ENCODE measurements at regions of chr7 and their contacts with region 1.

Region 1: DNA sequence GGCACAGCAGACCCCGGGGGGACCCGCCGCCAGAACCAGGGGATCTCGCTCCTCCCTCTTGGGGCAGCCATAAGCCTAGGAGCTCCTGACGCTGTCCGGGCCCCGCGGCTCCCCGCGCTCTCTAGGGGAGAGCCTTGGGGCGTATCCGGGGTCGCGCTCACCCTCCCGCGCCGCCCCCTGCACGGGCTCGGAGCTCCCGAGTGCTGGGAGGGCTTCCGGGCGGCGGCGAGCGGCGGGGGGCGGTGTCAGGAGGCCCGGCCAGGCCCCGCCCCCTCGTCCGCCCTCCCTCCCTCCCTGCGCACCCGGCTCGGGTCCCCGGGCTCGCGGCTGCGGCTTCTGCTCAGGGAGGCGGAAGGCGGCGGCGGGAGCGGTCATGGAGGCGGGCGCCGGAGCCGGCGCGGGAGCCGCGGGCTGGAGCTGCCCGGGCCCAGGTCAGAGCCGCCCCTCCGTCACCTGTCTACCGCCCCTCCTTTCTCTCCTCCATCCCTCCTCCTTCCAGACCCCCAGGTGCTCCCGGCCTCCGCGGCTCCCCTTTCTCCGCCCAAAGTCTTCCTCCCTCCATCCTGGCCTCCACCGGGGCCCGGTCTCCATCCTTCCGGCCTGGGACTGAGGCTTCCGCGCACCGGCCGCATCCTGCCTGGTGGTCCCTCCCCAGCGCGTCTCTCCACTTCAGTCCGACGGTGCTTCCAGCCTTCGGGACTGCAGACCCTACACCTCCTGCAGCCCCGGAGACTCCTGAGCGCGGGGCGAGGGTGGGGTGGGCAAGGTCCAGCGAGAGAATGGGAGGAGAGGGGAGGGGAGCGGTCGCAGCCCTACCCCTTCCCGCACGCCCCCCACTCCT is 427 bp upstream of the CCDC136 start:
- DNase-seq: peak; percentile 65 to 66
- H3K4me3 ChIP-seq: peak overlapping the region; percentile 65 to 77
- H3K27ac ChIP-seq: peak overlapping the region; percentile 81 to 86
- H3K4me1 ChIP-seq: peaks cover 0 to 14% of the 10 kb centered on the region in 2 donors
- H3K27me3 ChIP-seq: no peaks in the 10 kb centered on the region
- CTCF ChIP-seq: no peak
- POLR2A ChIP-seq: peak in 1 of 2 donors; percentile 43

Region 2: GRCh38 chr7:128666200-128666599 is 125.1 kb before region 1 on chr7:
- intact Hi-C with region 1: no loop called
- DNase-seq: no peak
- H3K4me3 ChIP-seq: no peak overlapping the region
- H3K27ac ChIP-seq: no peak overlapping the region
- H3K4me1 ChIP-seq: no peaks in the 10 kb centered on the region
- H3K27me3 ChIP-seq: no peaks in the 10 kb centered on the region
- CTCF ChIP-seq: no peak
- POLR2A ChIP-seq: no peak

Region 3: GRCh38 chr7:128869944-128870285 is 78.6 kb after region 1 on chr7:
- intact Hi-C with region 1: loop called (anchors 5 kb)
- DNase-seq: no peak
- H3K4me3 ChIP-seq: peak overlapping the region; percentile 37 to 38
- H3K27ac ChIP-seq: no peak overlapping the region
- H3K4me1 ChIP-seq: peaks cover 0 to 11% of the 10 kb centered on the region in 2 donors
- H3K27me3 ChIP-seq: no peaks in the 10 kb centered on the region
- CTCF ChIP-seq: no peak
- POLR2A ChIP-seq: no peak

Region 4: GRCh38 chr7:128997181-128997580 is 205.8 kb after region 1 on chr7:
- intact Hi-C with region 1: no loop called
- DNase-seq: no peak
- H3K4me3 ChIP-seq: no peak overlapping the region
- H3K27ac ChIP-seq: no peak overlapping the region
- H3K4me1 ChIP-seq: no peaks in the 10 kb centered on the region
- H3K27me3 ChIP-seq: no peaks in the 10 kb centered on the region
- CTCF ChIP-seq: no peak
- POLR2A ChIP-seq: no peak